Activated T-helper 1 cell treated with anti-CD3 and anti-CD28 coated beads, Interleukin-12 subunit alpha, Interleukin-12 subunit beta, Interleukin-2, Interleukin-4 antibody, amounts not matched to agents 30 ng/mL and 10 ng/mL and 1 ng/mL, durations not matched to agents 14 hours and 24 hours and 36 hours (primary cell): ENCODE measurements at regions of chrX and their contacts with region 1.

Region 1: GRCh38 chrX:31228415-31228832 is 156.6 kb upstream of the FTHL17 start:
- DNase-seq: no peak
- H3K4me3 Mint-ChIP-seq: no peak overlapping the region
- H3K27ac Mint-ChIP-seq: no peak overlapping the region
- H3K4me1 Mint-ChIP-seq: peaks cover 12% of the 10 kb centered on the region
- H3K27me3 Mint-ChIP-seq: no peaks in the 10 kb centered on the region

Region 2: DNA sequence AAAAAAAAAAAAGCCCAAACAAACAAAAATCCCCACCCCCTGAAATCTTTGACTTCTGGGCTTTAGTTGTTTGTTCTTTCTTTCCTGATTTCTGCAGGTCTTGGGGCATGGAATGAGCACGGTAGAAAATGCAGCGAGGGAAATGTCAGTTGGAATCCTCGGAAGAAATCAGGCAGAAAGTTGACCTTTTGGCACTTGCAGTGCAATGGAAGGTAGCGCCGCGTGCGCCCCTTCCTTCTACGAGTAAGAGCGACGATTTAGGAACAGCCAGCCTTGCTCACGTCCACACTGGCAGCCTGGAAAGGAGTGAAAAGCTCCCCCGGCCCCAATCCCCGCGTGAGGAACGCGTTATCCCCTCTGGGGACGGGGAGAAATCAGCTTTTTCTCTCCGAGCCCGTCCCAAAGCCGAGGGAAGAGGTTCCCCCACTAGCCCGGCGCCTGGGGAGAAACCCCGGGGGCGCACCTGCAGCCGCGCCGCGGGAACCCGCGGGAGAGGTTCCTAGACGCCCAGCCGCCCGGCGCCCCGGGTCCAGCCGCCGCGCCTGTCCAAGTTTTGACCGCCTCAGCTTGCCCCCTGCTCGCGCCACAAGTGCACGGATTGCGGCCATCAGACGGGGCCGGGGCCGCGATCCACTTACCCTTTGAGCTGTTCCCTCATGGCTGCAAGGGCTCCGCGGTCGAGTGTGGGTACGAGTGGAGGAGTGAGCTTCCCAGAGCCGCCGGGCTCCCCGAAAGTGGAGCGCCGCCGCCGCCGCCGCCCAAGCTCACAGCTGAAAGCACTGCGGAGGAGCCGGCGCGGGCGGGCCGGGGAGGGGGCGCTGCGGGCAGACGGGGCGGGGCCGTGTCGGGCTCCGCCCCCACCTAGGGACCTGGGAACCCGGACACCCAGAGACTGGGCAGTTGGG is 38.0 kb after region 1 on chrX:
- intact Hi-C with region 1: loop called (anchors 5 kb)
- DNase-seq: peak; percentile 12
- H3K4me3 Mint-ChIP-seq: peak overlapping the region; percentile 85
- H3K27ac Mint-ChIP-seq: peak overlapping the region; percentile 18
- H3K4me1 Mint-ChIP-seq: peaks cover 21% of the 10 kb centered on the region
- H3K27me3 Mint-ChIP-seq: peaks cover 17% of the 10 kb centered on the region

Region 3: DNA sequence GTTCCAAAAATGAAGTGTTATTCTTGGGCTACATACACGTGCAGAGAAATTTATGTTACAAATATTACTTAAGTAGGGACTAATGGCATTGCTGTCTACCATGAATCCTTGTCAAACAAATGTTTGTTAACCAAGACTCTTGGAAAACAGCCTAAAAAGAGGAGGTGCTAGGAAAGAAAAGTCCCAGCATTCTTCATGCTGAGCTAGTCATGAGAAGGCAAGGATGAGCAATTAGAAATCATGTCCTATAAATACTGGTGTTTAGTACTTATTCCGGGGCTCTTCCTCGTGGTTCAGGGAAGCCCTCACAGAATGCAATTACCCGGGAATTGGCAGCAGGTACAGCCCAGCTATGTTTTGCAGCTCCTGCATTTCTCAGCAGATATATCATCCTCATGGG is 221.5 kb after region 1 on chrX:
- intact Hi-C with region 1: no loop called
- DNase-seq: no peak
- H3K4me3 Mint-ChIP-seq: no peak overlapping the region
- H3K27ac Mint-ChIP-seq: no peak overlapping the region
- H3K4me1 Mint-ChIP-seq: no peaks in the 10 kb centered on the region
- H3K27me3 Mint-ChIP-seq: no peaks in the 10 kb centered on the region